ENCODE measurements at regions of chr5 and their contacts with region 1.

Region 1: GRCh38 chr5:146158257-146158656 is 24.2 kb downstream of the LARS1 start:
- DNase-seq: no peak
- H3K4me3 ChIP-seq: no peak overlapping the region
- H3K27ac ChIP-seq: no peak overlapping the region
- H3K4me1 ChIP-seq: no peaks in the 10 kb centered on the region
- H3K27me3 ChIP-seq: no peaks in the 10 kb centered on the region
- CTCF ChIP-seq: no peak

Region 2: DNA sequence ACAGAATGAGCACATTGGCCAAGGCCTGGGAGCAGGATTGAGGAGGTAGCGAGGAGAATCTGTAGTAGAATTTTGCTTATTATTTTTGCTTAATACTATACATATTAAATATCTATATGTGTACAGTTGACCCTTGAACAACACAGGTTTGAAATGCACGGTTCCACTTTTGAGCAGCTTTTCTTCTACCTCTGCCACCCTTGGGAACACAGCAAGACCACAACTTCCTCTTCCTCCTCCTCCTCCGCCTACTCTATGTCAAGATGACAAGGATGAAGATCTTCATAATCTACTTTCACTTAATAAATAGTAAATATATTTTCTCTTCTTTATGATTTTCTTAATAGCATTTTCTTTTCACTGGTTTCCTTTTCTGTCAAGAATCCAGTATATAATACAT is 1446.2 kb before region 1 on chr5:
- CTCF ChIA-PET with region 1: no interaction called
- POLR2A ChIA-PET with region 1: no interaction called
- intact Hi-C with region 1: no loop called
- DNase-seq: no peak
- H3K4me3 ChIP-seq: no peak overlapping the region
- H3K27ac ChIP-seq: no peak overlapping the region
- H3K4me1 ChIP-seq: no peaks in the 10 kb centered on the region
- H3K27me3 ChIP-seq: no peaks in the 10 kb centered on the region
- CTCF ChIP-seq: no peak

Region 3: GRCh38 chr5:145637396-145637795 is 520.9 kb before region 1 on chr5:
- CTCF ChIA-PET with region 1: no interaction called
- POLR2A ChIA-PET with region 1: no interaction called
- intact Hi-C with region 1: no loop called
- DNase-seq: no peak
- H3K4me3 ChIP-seq: no peak overlapping the region
- H3K27ac ChIP-seq: no peak overlapping the region
- H3K4me1 ChIP-seq: no peaks in the 10 kb centered on the region
- H3K27me3 ChIP-seq: no peaks in the 10 kb centered on the region
- CTCF ChIP-seq: no peak

Region 4: GRCh38 chr5:146124580-146124979 is 33.7 kb before region 1 on chr5:
- CTCF ChIA-PET with region 1: no interaction called
- POLR2A ChIA-PET with region 1: no interaction called
- intact Hi-C with region 1: loop called (anchors 5 kb)
- DNase-seq: no peak
- H3K4me3 ChIP-seq: no peak overlapping the region
- H3K27ac ChIP-seq: no peak overlapping the region
- H3K4me1 ChIP-seq: peaks cover 6% of the 10 kb centered on the region
- H3K27me3 ChIP-seq: no peaks in the 10 kb centered on the region
- CTCF ChIP-seq: no peak

Measured in A673 (cell line).